ENCODE measurements at regions of chr10 and their contacts with region 1.

Region 1: DNA sequence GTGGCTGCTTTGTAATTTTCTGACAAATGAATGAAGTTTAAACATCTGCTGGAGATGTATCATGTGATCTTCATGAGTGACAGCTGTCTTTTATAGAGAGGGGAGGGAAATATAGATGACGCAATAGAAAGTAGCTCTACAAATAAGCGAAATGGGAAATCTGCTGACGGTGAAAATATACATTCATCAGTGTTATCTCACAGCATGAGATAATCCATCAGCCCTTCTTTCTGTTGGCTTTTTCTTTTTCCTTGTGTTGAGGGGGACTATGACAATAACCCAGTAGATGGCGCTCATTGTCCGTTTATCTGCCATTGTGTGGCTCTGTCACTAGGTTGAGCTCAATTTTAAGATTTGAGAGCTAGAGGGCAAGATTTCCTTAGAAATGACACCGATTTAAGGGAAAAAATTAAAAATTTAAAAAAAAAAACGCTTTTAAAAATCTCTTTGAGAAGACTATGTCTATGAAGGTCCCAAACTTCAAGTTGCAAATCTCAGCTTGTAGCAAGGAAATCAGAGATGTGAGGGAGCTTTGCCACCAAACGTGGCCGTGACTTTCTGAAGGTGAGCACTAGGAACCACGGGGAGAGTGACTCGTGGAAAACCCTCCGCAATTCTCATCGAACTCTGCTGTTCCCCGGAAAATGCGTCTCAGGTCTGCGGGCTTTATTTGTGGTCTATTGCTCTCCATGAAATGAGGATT is 114.6 kb upstream of the SFMBT2 start:
- DNase-seq: peak in 8 of 9 donors; percentile 44 to 79 (median 67)
- ATAC-seq: peak; percentile 90
- H3K4me3 ChIP-seq: no peak overlapping the region
- H3K4me3 Mint-ChIP-seq: peak overlapping the region in 3 of 10 donors; percentile 25 to 36 (median 28)
- H3K27ac ChIP-seq: no peak overlapping the region
- H3K27ac Mint-ChIP-seq: peak overlapping the region in 5 of 9 donors; percentile 7 to 52 (median 33)
- H3K4me1 ChIP-seq: peaks cover 0 to 4% of the 10 kb centered on the region in 2 donors
- H3K4me1 Mint-ChIP-seq: peaks cover 12 to 38% (median 17%) of the 10 kb centered on the region in 7 donors
- H3K27me3 ChIP-seq: no peaks in the 10 kb centered on the region
- H3K27me3 Mint-ChIP-seq: peaks cover 0 to 23% (median 0%) of the 10 kb centered on the region in 5 donors

Region 2: DNA sequence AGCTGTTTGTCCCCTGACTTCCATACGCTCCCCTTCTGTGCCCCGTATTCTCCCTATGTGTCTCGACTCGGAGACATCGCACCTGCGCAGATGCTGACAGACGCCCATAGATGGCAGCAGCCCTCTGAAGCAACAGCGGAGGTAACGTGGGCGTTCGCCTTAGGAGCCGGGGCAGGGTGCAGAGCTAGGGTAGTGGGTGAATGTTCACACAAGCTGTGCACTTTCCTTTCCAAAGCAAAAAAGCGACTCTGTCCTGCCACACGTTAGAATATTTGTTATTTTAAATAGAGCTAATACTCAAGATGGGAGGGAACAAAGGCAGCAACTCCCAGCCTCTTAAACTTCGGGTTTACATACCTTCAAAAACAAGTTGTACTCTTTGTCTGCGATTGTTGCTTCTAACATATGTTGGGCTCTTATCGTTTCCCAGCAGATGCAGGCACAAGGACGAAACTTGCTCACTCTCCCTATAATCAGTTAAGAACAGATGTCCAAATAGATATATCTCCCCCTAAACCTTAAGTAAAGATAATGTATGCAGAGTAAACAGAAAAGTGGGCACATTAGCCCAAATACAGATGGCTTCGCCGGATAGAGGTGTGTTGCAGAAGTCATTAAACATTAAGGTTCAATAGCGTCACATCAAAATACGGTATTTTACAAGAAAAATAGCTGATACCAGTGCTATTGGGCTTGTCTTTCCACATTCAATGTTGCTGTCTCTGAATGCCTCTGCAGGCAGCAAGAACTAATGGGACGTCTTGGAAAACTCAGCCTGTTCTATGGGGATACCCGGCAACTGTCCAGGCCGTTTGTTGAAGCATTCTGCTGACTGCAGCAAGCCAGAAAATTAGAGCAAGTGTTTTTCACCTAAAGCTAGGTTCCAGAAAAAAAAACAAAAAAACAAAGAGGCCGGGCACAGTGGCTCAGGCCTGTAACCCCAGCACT is 605.1 kb before region 1 on chr10:
- CTCF ChIA-PET with region 1: interaction called, 4 read pairs
- POLR2A ChIA-PET with region 1: no interaction called
- intact Hi-C with region 1: loop called in 1 of 2 experiments (anchors 5 kb)
- DNase-seq: peak; percentile 47 to 74 (median 69)
- ATAC-seq: peak; percentile 97
- H3K4me3 ChIP-seq: no peak overlapping the region
- H3K4me3 Mint-ChIP-seq: peak overlapping the region in 7 of 10 donors; percentile 13 to 45 (median 26)
- H3K27ac ChIP-seq: no peak overlapping the region
- H3K27ac Mint-ChIP-seq: no peak overlapping the region
- H3K4me1 ChIP-seq: peaks cover 0 to 21% of the 10 kb centered on the region in 2 donors
- H3K4me1 Mint-ChIP-seq: peaks cover 0 to 25% (median 12%) of the 10 kb centered on the region in 7 donors
- H3K27me3 ChIP-seq: no peaks in the 10 kb centered on the region
- H3K27me3 Mint-ChIP-seq: peaks cover 0 to 14% (median 5%) of the 10 kb centered on the region in 5 donors

Region 3: GRCh38 chr10:7484456-7485243 is 40.8 kb before region 1 on chr10:
- CTCF ChIA-PET with region 1: interaction called, 6 read pairs
- POLR2A ChIA-PET with region 1: interaction called, 10 read pairs
- intact Hi-C with region 1: loop called in 1 of 2 experiments (anchors 1 kb)
- DNase-seq: peak in 8 of 9 donors; percentile 49 to 89 (median 82)
- ATAC-seq: peak; percentile 92
- H3K4me3 ChIP-seq: peak overlapping the region; percentile 34
- H3K4me3 Mint-ChIP-seq: peak overlapping the region; percentile 54 to 85 (median 78)
- H3K27ac ChIP-seq: peak overlapping the region; percentile 73
- H3K27ac Mint-ChIP-seq: peak overlapping the region; percentile 93 to 100 (median 99)
- H3K4me1 ChIP-seq: peaks cover 63 to 75% of the 10 kb centered on the region in 2 donors
- H3K4me1 Mint-ChIP-seq: peaks cover 67 to 96% (median 94%) of the 10 kb centered on the region in 7 donors
- H3K27me3 ChIP-seq: no peaks in the 10 kb centered on the region
- H3K27me3 Mint-ChIP-seq: no peaks in the 10 kb centered on the region

Region 4: GRCh38 chr10:7622969-7623368 is 97.5 kb after region 1 on chr10:
- CTCF ChIA-PET with region 1: no interaction called
- POLR2A ChIA-PET with region 1: no interaction called
- intact Hi-C with region 1: loop called (anchors 1 to 2 kb)
- DNase-seq: peak in 3 of 9 donors; percentile 3 to 7 (median 5)
- ATAC-seq: no peak
- H3K4me3 ChIP-seq: no peak overlapping the region
- H3K4me3 Mint-ChIP-seq: no peak overlapping the region
- H3K27ac ChIP-seq: no peak overlapping the region
- H3K27ac Mint-ChIP-seq: no peak overlapping the region
- H3K4me1 ChIP-seq: no peaks in the 10 kb centered on the region
- H3K4me1 Mint-ChIP-seq: no peaks in the 10 kb centered on the region
- H3K27me3 ChIP-seq: no peaks in the 10 kb centered on the region
- H3K27me3 Mint-ChIP-seq: peaks cover 0 to 11% (median 0%) of the 10 kb centered on the region in 5 donors

Region 5: GRCh38 chr10:7756360-7756992 is 231.0 kb after region 1 on chr10:
- CTCF ChIA-PET with region 1: interaction called, 3 read pairs
- POLR2A ChIA-PET with region 1: no interaction called
- intact Hi-C with region 1: loop called in 1 of 2 experiments (anchors 1 kb)
- DNase-seq: peak in 4 of 9 donors; percentile 3 to 24 (median 6)
- ATAC-seq: peak; percentile 38
- H3K4me3 ChIP-seq: no peak overlapping the region
- H3K4me3 Mint-ChIP-seq: no peak overlapping the region
- H3K27ac ChIP-seq: no peak overlapping the region
- H3K27ac Mint-ChIP-seq: peak overlapping the region in 1 of 9 donors; percentile 39
- H3K4me1 ChIP-seq: no peaks in the 10 kb centered on the region
- H3K4me1 Mint-ChIP-seq: no peaks in the 10 kb centered on the region
- H3K27me3 ChIP-seq: no peaks in the 10 kb centered on the region
- H3K27me3 Mint-ChIP-seq: no peaks in the 10 kb centered on the region

Region 6: DNA sequence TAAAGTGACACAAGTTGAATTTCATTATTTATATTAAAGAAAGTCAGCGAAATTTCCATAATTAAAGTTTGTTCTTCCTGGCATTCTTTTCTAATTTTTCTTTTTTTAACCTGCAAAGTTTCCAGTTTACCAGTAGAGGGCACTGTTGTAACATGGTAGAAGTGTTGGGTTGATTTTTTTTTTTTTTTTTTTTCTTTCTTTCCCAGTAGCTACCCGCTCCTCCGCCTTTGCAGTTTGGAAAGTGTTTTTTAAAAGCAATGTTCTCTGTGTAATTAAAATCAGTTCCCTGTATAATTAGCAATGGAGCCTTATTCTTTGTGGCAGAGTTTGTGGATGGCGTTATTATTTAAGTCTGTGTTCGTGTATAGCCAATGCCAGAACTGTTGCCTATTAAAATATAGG is 346.6 kb after region 1 on chr10:
- CTCF ChIA-PET with region 1: no interaction called
- POLR2A ChIA-PET with region 1: no interaction called
- intact Hi-C with region 1: loop called in 1 of 2 experiments (anchors 5 kb)
- DNase-seq: peak in 6 of 9 donors; percentile 9 to 51 (median 44)
- ATAC-seq: peak; percentile 54
- H3K4me3 ChIP-seq: no peak overlapping the region
- H3K4me3 Mint-ChIP-seq: peak overlapping the region; percentile 8 to 84 (median 74)
- H3K27ac ChIP-seq: no peak overlapping the region
- H3K27ac Mint-ChIP-seq: peak overlapping the region in 3 of 9 donors; percentile 16 to 48 (median 41)
- H3K4me1 ChIP-seq: peaks cover 0 to 3% of the 10 kb centered on the region in 2 donors
- H3K4me1 Mint-ChIP-seq: peaks cover 6 to 61% (median 31%) of the 10 kb centered on the region in 7 donors
- H3K27me3 ChIP-seq: no peaks in the 10 kb centered on the region
- H3K27me3 Mint-ChIP-seq: no peaks in the 10 kb centered on the region

Region 7: GRCh38 chr10:9209105-9209798 is 1683.8 kb after region 1 on chr10:
- CTCF ChIA-PET with region 1: interaction called, 3 read pairs
- POLR2A ChIA-PET with region 1: no interaction called
- intact Hi-C with region 1: loop called (anchors 1 to 2 kb)
- DNase-seq: peak; percentile 32 to 75 (median 58)
- ATAC-seq: peak; percentile 68
- H3K4me3 ChIP-seq: no peak overlapping the region
- H3K4me3 Mint-ChIP-seq: no peak overlapping the region
- H3K27ac ChIP-seq: no peak overlapping the region
- H3K27ac Mint-ChIP-seq: no peak overlapping the region
- H3K4me1 ChIP-seq: no peaks in the 10 kb centered on the region
- H3K4me1 Mint-ChIP-seq: peaks cover 2 to 8% (median 6%) of the 10 kb centered on the region in 7 donors
- H3K27me3 ChIP-seq: no peaks in the 10 kb centered on the region
- H3K27me3 Mint-ChIP-seq: peaks cover 4 to 13% (median 6%) of the 10 kb centered on the region in 5 donors